ENCODE measurements at regions of chr14 and their contacts with region 1.

Region 1: DNA sequence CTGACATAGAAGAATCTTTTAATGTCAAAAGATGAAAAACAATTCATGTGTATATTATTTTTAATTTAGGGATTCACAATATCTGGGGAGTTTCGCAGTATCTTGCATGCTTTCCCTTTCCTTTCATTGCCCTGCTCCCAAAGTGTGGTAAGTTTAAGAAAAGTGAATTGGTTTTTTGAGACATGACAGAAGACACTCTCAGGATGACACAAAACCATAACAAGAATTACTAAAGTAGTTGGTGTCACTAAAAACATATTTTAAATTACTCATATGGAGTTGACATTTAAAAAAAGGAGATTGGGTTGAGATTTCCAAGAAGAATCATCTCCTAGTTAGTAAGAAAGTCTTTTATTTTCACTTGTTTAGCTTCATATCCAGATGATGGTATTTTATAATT is 5.1 kb upstream of the PCNX1 start:
- DNase-seq: no peak
- H3K4me3 Mint-ChIP-seq: no peak overlapping the region
- H3K27ac Mint-ChIP-seq: peak overlapping the region; percentile 29
- H3K4me1 Mint-ChIP-seq: peaks cover 55% of the 10 kb centered on the region
- H3K27me3 Mint-ChIP-seq: peaks cover 4% of the 10 kb centered on the region

Region 2: GRCh38 chr14:70873627-70874026 is 28.6 kb before region 1 on chr14:
- intact Hi-C with region 1: loop called (anchors 1 kb)
- DNase-seq: no peak
- H3K4me3 Mint-ChIP-seq: no peak overlapping the region
- H3K27ac Mint-ChIP-seq: no peak overlapping the region
- H3K4me1 Mint-ChIP-seq: peaks cover 24% of the 10 kb centered on the region
- H3K27me3 Mint-ChIP-seq: no peaks in the 10 kb centered on the region

Measured in activated T-helper 1 cell treated with anti-CD3 and anti-CD28 coated beads, Interleukin-12 subunit alpha, Interleukin-12 subunit beta, Interleukin-2, Interleukin-4 antibody, amounts not matched to agents 30 ng/mL and 10 ng/mL and 1 ng/mL, durations not matched to agents 14 hours and 24 hours and 36 hours (primary cell).